K562 (cell line): ENCODE measurements at regions of chr22 and their contacts with region 1.

Region 1: GRCh38 chr22:17734187-17734586 is 40.1 kb downstream of the BID start:
- DNase-seq: no peak
- ATAC-seq: 0 out of 3 replicates have a peak, but pooled peaks have one; percentile 19
- H3K4me3 ChIP-seq: no peak overlapping the region
- H3K27ac ChIP-seq: no peak overlapping the region
- H3K4me1 ChIP-seq: peaks cover 0 to 2% of the 10 kb centered on the region in 2 experiments; a peak in 2 of 5 replicates
- H3K27me3 ChIP-seq: no peaks in the 10 kb centered on the region
- CTCF ChIP-seq: no peak
- EP300 ChIP-seq: no peak
- POLR2A ChIP-seq: no peak
- RAD21 ChIP-seq: no peak

Region 2: DNA sequence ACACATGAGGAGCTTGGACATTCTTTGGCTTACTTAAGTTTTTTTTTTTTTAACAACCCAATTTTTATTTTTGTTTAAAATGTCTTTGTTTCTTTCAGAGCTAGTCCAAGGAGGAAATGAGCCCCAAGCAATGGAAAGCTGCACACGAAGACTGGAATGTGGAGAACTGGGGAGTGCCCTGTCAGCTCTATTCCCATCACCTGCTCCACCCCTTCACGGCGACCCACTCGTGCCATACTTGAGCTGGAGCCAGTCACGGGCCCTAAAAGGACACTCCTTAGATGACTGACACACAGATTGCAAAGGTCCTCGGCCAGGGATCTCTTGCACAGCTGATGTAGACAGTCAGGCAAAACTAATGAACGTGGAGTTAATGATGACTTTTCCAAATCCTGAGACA is 181.4 kb before region 1 on chr22:
- CTCF ChIA-PET with region 1: no interaction called
- POLR2A ChIA-PET with region 1: no interaction called
- in situ Hi-C with region 1: loop called (anchors 10 kb)
- intact Hi-C with region 1: no loop called
- DNase-seq: no peak
- ATAC-seq: no peak
- H3K4me3 ChIP-seq: no peak overlapping the region
- H3K27ac ChIP-seq: no peak overlapping the region
- H3K4me1 ChIP-seq: 0 out of 5 replicates have a peak, but pooled peaks cover 0 to 4% of the 10 kb centered on the region in 2 experiments
- H3K27me3 ChIP-seq: peaks cover 58 to 67% of the 10 kb centered on the region in 2 experiments
- CTCF ChIP-seq: no peak
- EP300 ChIP-seq: no peak
- POLR2A ChIP-seq: no peak
- RAD21 ChIP-seq: no peak

Region 3: DNA sequence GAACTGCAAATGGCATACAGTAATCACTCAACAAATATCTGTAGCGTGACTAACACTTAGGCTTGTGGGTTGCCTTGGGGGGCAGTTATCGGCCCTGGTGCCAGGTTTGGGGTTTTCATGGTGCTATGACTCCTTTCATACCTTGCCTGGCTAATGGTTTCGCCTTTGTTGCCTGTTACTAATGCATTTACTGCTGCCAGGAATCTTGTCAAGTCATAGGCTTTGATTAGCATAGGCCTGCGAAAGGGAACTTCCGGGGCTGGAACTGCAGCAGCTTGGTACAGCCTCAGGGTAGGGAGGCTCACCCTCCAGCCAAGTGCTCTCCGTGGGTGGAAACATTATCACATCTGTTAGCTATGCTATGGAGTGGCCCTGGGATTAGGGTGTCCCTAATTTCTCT is 157.7 kb before region 1 on chr22:
- CTCF ChIA-PET with region 1: no interaction called
- POLR2A ChIA-PET with region 1: no interaction called
- in situ Hi-C with region 1: no loop called
- intact Hi-C with region 1: no loop called
- DNase-seq: peak in 2 of 4 experiments; percentile 31 to 32
- ATAC-seq: peak; percentile 65
- H3K4me3 ChIP-seq: no peak overlapping the region
- H3K27ac ChIP-seq: no peak overlapping the region
- H3K4me1 ChIP-seq: peaks cover 9 to 20% of the 10 kb centered on the region in 2 experiments; a peak in 4 of 5 replicates
- H3K27me3 ChIP-seq: peaks cover 18 to 32% of the 10 kb centered on the region in 2 experiments
- CTCF ChIP-seq: no peak
- EP300 ChIP-seq: no peak
- POLR2A ChIP-seq: no peak
- RAD21 ChIP-seq: no peak

Region 4: DNA sequence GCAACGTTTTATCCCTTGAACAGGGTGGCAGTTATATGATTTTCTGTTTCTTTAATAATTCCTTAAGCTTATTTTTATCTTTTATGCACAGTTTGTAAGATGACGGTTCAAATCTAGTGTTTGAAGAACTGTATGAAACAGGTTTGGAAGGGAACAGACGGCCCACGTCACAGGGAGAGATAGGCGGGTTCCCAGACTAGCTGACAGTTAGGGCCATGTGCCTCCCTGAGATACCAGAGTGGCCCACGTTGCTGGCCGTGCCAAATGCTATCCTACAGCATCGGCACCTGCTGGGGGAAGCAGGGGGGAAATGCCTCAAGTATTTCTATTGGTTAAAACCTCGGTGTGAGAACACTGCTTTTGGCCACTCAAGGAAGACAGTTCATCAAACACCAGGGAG is 90.3 kb after region 1 on chr22:
- CTCF ChIA-PET with region 1: no interaction called
- POLR2A ChIA-PET with region 1: no interaction called
- in situ Hi-C with region 1: no loop called
- intact Hi-C with region 1: no loop called
- DNase-seq: peak in 2 of 4 experiments; percentile 16 to 33
- ATAC-seq: 0 out of 3 replicates have a peak, but pooled peaks have one; percentile 16
- H3K4me3 ChIP-seq: no peak overlapping the region
- H3K27ac ChIP-seq: no peak overlapping the region
- H3K4me1 ChIP-seq: peaks cover 0 to 11% of the 10 kb centered on the region in 2 experiments; a peak in 4 of 5 replicates
- H3K27me3 ChIP-seq: no peaks in the 10 kb centered on the region
- CTCF ChIP-seq: no peak
- EP300 ChIP-seq: no peak
- POLR2A ChIP-seq: no peak
- RAD21 ChIP-seq: no peak